H1 (cell line): ENCODE measurements at regions of chr2 and their contacts with region 1.

Region 1: GRCh38 chr2:231052494-231053451 is 3.9 kb upstream of the PSMD1 start:
- DNase-seq: peak in 1 of 2 experiments; percentile 90
- H3K4me3 ChIP-seq: peak overlapping the region; percentile 36 to 59 (median 50)
- H3K27ac ChIP-seq: no peak overlapping the region
- H3K4me1 ChIP-seq: peaks cover 3 to 7% (median 5%) of the 10 kb centered on the region in 4 experiments
- H3K27me3 ChIP-seq: peaks cover 0 to 35% (median 17%) of the 10 kb centered on the region in 4 experiments; a peak in 6 of 7 replicates
- CTCF ChIP-seq: peak; percentile 77 to 97 (median 87)
- EP300 ChIP-seq: no peak
- POLR2A ChIP-seq: no peak
- RAD21 ChIP-seq: peak; percentile 37 to 68

Region 2: GRCh38 chr2:230751062-230751461 is 301.7 kb before region 1 on chr2:
- CTCF ChIA-PET with region 1: no interaction called
- POLR2A ChIA-PET with region 1: no interaction called
- DNase-seq: no peak
- H3K4me3 ChIP-seq: no peak overlapping the region
- H3K27ac ChIP-seq: no peak overlapping the region
- H3K4me1 ChIP-seq: peaks cover 0 to 2% (median under 1%) of the 10 kb centered on the region in 4 experiments; a peak in 2 of 7 replicates
- H3K27me3 ChIP-seq: no peaks in the 10 kb centered on the region
- CTCF ChIP-seq: no peak
- EP300 ChIP-seq: no peak
- POLR2A ChIP-seq: no peak
- RAD21 ChIP-seq: no peak

Region 3: GRCh38 chr2:231000211-231000904 is 52.4 kb before region 1 on chr2:
- CTCF ChIA-PET with region 1: interaction called, 15 read pairs
- POLR2A ChIA-PET with region 1: no interaction called
- DNase-seq: peak; percentile 60 to 70
- H3K4me3 ChIP-seq: no peak overlapping the region
- H3K27ac ChIP-seq: no peak overlapping the region
- H3K4me1 ChIP-seq: no peaks in the 10 kb centered on the region; a peak in 2 of 7 replicates
- H3K27me3 ChIP-seq: peaks cover 0 to 6% (median 3%) of the 10 kb centered on the region in 4 experiments; a peak in 3 of 7 replicates
- CTCF ChIP-seq: peak; percentile 67 to 80 (median 69)
- EP300 ChIP-seq: no peak
- POLR2A ChIP-seq: no peak
- RAD21 ChIP-seq: peak; percentile 61 to 73; a peak in 3 of 4 replicates

Region 4: GRCh38 chr2:231037731-231038482 is 14.9 kb before region 1 on chr2:
- CTCF ChIA-PET with region 1: interaction called, 38 read pairs
- POLR2A ChIA-PET with region 1: interaction called, 4 read pairs
- DNase-seq: peak in 1 of 2 experiments; percentile 58
- H3K4me3 ChIP-seq: peak overlapping the region; percentile 33 to 71 (median 46)
- H3K27ac ChIP-seq: no peak overlapping the region
- H3K4me1 ChIP-seq: peaks cover 0 to 6% (median under 1%) of the 10 kb centered on the region in 4 experiments; a peak in 4 of 7 replicates
- H3K27me3 ChIP-seq: peaks cover 24 to 36% (median 33%) of the 10 kb centered on the region in 4 experiments
- CTCF ChIP-seq: peak; percentile 1 to 33 (median 7)
- EP300 ChIP-seq: no peak
- POLR2A ChIP-seq: no peak
- RAD21 ChIP-seq: no peak; a peak in 1 of 4 replicates